Activated CD4-positive, alpha-beta T cell treated with anti-CD3 and anti-CD28 coated beads for 36 hours (primary cell): ENCODE measurements at regions of chr2 and their contacts with region 1.

Region 1: DNA sequence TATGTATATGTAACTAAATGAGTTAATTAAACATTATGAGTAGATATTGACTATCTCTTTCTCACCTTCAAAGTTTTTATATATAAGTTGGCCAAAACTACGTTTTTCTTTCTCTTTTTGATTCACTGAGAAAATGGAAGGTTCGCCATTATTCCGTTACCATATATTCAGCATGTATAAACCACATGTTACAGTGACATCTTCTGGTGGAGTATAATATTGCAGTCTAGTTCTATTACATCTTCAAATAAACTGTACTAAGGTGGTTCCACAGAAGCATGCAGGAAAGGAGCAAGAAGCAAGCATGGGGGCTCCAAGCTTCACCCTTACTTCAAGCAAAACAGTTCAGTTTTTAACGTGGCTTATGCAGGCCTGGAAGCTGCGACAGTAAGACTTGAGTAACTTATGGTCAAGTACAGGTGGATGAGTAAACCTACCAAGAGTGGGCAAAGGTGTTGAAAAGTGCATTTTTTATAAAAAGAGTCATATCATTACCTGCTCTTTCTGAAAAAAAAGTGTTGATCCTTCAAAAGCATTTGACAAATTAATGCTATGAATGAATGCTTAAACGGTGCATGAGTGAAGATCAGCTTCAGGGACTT is 129.8 kb upstream of the RAB6C start:
- DNase-seq: no peak
- ATAC-seq: peak; percentile 53
- H3K4me3 Mint-ChIP-seq: no peak overlapping the region
- H3K27ac Mint-ChIP-seq: no peak overlapping the region
- H3K4me1 Mint-ChIP-seq: no peaks in the 10 kb centered on the region
- H3K27me3 Mint-ChIP-seq: peaks cover 10% of the 10 kb centered on the region

Region 2: GRCh38 chr2:128736689-128737545 is 1112.7 kb before region 1 on chr2:
- CTCF ChIA-PET with region 1: no interaction called
- POLR2A ChIA-PET with region 1: no interaction called
- intact Hi-C with region 1: loop called in 1 of 2 experiments (anchors 1 kb)
- DNase-seq: peak; percentile 84
- ATAC-seq: peak; percentile 55
- H3K4me3 Mint-ChIP-seq: peak overlapping the region; percentile 47
- H3K27ac Mint-ChIP-seq: no peak overlapping the region
- H3K4me1 Mint-ChIP-seq: peaks cover 6% of the 10 kb centered on the region
- H3K27me3 Mint-ChIP-seq: peaks cover 9% of the 10 kb centered on the region